ENCODE measurements at regions of chrX and their contacts with region 1.

Region 1: DNA sequence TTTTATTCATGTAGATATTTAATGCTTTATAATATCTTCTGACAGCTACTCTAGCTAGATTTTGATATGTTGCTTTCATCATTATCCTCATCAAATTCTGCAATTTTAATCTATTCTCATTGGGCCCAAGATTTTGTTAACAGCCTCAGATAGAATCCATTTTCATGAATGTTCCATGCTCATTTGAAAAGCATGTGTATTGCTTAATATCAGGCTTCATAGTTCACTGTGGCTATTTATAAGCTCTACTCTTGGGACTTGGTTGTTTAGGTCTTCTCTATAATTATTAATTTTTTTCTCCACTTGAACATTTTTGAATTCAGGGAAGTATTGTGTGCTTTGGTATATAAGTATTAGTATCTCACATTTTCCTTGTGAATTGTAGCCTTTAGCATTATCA is 41.8 kb downstream of the RAB40A start:
- DNase-seq: no peak
- H3K4me3 ChIP-seq: no peak overlapping the region
- H3K27ac ChIP-seq: no peak overlapping the region
- H3K27me3 ChIP-seq: no peaks in the 10 kb centered on the region
- CTCF ChIP-seq: no peak

Region 2: GRCh38 chrX:103498786-103499185 is 21.3 kb after region 1 on chrX:
- CTCF ChIA-PET with region 1: no interaction called
- POLR2A ChIA-PET with region 1: no interaction called
- DNase-seq: no peak
- H3K4me3 ChIP-seq: no peak overlapping the region
- H3K27ac ChIP-seq: no peak overlapping the region
- H3K27me3 ChIP-seq: no peaks in the 10 kb centered on the region
- CTCF ChIP-seq: no peak

Region 3: DNA sequence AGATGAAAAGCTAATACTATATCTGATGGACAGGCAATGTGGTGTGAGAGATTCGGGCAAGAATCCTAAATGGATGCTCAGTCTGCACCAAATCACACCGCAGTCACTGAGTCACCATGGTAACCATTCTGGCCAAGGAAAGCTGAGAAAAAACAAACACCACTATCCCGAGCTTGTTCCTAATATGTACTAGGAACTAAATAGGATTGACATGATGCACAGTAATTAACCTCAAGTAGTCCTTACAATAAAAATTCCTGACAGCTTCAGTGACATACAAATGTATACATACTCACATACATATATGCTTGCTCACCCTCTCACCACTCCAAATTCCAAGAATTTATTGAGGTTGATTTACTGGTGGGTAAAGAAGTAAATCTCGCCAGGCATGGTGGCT is 42.9 kb after region 1 on chrX:
- CTCF ChIA-PET with region 1: no interaction called
- POLR2A ChIA-PET with region 1: no interaction called
- DNase-seq: peak; percentile 10
- H3K4me3 ChIP-seq: no peak overlapping the region
- H3K27ac ChIP-seq: no peak overlapping the region
- H3K27me3 ChIP-seq: no peaks in the 10 kb centered on the region
- CTCF ChIP-seq: no peak

Region 4: DNA sequence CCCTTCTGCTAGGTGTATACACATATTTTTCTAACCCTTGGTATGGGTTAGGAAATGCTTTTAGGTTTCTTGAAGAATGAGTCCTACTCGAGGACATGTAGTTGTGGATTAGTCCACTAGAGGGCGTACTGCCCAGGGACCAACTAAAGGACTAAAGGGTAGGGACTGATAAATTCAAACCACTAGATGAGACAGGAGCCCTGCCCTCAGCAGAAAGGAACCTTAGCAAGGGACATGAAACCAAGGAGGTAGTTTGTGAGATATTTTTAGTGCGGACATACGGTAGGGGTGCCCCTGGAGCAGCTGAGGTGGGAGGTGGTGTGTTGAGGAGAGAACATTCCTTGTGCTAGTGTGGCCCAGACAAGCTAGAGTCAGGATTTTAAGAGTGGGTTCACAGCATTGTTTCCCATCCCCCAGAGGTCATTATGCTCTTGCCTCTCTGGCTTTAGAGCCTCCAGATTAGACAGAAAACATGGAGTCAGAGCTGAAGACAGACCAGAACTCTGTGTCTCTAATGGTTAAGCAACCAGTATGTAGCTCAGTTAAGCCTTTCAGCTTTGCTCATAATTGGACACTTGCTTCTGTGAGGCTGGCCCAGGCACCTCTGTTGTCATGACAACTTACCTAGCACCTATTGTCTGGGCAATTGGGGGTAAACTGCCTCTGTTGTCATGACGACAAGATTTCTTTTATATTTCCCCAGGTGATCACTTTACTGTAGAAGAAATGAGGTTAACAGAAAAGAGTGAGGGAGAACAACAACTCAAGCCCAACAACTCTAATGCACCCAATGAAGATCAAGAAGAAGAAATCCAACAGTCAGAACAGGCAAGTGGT is 234.3 kb after region 1 on chrX:
- CTCF ChIA-PET with region 1: interaction called, 11 read pairs
- POLR2A ChIA-PET with region 1: no interaction called
- DNase-seq: no peak
- H3K4me3 ChIP-seq: no peak overlapping the region
- H3K27ac ChIP-seq: no peak overlapping the region
- H3K27me3 ChIP-seq: no peaks in the 10 kb centered on the region
- CTCF ChIP-seq: peak; percentile 57